AG04450 (cell line): ENCODE measurements at regions of chr7 and their contacts with region 1.

Region 1: DNA sequence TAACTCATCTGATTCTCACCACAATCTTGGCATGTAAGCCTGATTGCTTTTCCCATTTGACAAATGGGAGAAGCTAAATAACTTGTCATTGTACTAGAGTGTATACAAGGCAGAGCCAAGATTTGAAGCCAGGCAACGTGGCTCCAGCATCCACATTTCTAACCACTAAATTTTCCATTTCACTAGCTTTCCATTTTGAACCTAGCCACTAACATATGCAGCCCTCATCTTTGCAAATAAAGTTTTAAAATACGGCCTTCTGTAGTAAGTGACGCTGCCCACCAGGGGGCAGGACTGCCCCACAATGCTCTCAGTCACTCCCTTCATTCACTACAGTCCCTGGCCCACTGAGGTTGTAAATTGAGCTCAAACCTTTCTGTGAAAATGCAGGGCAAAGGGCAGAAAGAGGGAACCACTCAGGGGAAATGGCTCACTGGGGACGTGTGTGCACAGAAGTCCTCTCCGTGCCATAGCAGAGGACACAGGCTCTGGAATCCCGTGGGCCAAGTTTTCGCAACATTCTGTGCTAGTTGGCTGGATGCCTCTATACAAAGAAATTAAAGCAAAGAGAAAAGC is 315.7 kb downstream of the TNS3 start:
- DNase-seq: peak; percentile 20
- H3K4me3 ChIP-seq: no peak overlapping the region
- H3K27ac ChIP-seq: no peak overlapping the region
- H3K27me3 ChIP-seq: no peaks in the 10 kb centered on the region
- CTCF ChIP-seq: peak; percentile 94

Region 2: DNA sequence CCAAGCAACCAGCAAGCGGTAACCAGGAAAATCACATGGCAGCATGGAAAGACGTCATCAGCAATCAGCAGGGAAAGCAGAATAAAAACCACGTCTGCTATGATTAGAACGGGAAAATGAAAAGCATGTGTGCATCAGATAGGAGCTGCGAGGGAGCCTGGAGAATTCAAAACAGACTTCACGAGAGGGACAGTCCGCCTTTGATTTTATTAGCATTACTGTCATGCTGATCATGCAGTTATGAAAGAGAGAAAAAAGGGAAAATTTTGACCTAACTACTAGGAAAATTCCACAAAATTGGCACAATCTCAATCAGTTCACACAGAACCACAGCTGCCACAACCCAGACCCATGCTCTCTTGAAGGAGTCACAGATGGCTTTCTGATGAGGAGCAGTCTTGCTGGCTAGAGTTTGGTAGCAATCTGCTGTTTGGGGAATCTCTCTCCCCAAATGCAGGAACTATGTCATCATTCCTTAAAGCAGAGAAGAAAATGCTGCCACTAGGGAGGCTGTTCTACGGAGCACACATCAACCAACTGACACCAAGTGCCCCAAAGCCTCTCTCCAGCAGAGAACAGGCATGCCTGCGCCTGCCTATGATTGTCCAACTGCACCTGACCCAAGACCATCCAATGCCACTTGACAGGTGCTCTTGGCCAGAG is 19.8 kb after region 1 on chr7:
- CTCF ChIA-PET with region 1: interaction called, 18 read pairs
- POLR2A ChIA-PET with region 1: no interaction called
- DNase-seq: no peak
- H3K4me3 ChIP-seq: no peak overlapping the region
- H3K27ac ChIP-seq: no peak overlapping the region
- H3K27me3 ChIP-seq: no peaks in the 10 kb centered on the region
- CTCF ChIP-seq: no peak

Region 3: DNA sequence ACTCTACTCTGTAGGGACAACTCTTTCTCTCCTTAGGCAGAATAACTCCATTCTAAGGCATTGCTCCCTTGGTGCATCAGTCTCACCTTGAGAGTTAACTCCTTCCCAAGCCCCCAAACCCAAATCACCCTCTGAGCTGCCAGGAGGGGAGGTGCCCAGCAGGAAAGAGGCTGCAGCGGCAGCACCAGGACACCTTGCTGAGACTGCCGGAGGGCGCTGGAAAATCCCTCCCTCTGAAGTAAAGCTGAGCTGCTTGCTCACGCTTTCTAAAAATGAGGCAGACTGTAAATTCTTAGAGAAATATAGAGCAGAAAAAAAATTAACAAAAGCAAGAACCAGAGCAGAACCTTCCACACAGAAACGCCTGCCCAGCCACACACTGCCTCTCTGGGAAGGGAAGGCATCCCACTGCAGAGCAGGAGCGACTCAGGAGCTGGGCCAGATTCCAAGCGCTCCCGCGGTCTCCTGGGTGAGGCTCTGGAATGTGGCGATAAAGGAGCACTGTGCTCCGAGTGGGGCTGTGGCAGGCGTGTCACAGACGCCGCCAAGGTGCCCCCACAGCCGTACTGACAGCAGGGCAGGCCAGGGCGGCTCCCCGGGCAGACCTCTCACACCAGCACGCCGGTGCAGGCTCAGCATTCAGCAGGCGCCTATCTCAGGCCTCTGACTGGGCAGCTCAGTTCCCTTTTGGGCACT is 113.6 kb after region 1 on chr7:
- CTCF ChIA-PET with region 1: interaction called, 20 read pairs
- POLR2A ChIA-PET with region 1: no interaction called
- DNase-seq: peak; percentile 36
- H3K4me3 ChIP-seq: no peak overlapping the region
- H3K27ac ChIP-seq: peak overlapping the region; percentile 78
- H3K27me3 ChIP-seq: no peaks in the 10 kb centered on the region
- CTCF ChIP-seq: no peak

Region 4: GRCh38 chr7:47422611-47423010 is 156.4 kb after region 1 on chr7:
- CTCF ChIA-PET with region 1: interaction called, 14 read pairs
- POLR2A ChIA-PET with region 1: no interaction called
- DNase-seq: no peak
- H3K4me3 ChIP-seq: no peak overlapping the region
- H3K27ac ChIP-seq: peak overlapping the region; percentile 23
- H3K27me3 ChIP-seq: no peaks in the 10 kb centered on the region
- CTCF ChIP-seq: no peak

Region 5: DNA sequence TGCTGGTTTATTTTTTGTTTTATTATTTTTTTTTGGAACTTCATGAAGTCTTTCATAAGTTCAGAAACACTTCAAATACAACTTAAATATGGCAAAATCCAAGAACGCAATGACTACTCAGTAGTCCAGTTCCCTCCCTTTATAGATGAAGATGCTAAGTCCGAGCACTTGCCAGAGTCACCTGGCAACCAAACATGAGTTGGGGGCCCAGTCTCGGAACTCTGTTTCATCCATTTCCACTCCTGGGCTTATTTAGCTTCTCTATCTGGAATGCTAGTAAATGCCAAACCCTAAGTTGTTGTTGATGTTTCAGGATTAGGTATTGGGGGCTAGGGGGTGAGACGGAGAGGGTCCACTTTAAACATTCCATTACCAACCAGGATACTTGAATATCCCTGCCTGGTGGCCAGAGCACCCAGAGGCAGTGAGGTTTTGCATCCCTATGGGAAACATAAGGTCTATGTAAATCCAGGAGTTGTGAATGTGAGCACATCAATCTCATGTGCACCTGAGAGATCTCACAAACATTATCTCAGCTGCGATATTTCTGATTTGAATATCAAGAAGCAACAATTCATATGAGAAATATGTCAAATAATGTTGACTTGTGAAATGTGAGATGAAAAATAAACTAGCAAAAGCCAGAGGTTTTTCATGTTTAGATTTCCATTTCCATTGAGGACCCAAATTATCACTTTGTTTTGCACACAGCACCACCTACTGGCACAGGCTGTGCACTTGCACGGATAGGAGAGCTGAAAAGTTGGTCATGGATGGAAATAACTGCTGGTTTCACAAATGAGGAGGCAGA is 552.8 kb after region 1 on chr7:
- CTCF ChIA-PET with region 1: interaction called, 21 read pairs
- POLR2A ChIA-PET with region 1: no interaction called
- DNase-seq: peak; percentile 54
- H3K4me3 ChIP-seq: no peak overlapping the region
- H3K27ac ChIP-seq: no peak overlapping the region
- H3K27me3 ChIP-seq: no peaks in the 10 kb centered on the region
- CTCF ChIP-seq: peak; percentile 98

Region 6: DNA sequence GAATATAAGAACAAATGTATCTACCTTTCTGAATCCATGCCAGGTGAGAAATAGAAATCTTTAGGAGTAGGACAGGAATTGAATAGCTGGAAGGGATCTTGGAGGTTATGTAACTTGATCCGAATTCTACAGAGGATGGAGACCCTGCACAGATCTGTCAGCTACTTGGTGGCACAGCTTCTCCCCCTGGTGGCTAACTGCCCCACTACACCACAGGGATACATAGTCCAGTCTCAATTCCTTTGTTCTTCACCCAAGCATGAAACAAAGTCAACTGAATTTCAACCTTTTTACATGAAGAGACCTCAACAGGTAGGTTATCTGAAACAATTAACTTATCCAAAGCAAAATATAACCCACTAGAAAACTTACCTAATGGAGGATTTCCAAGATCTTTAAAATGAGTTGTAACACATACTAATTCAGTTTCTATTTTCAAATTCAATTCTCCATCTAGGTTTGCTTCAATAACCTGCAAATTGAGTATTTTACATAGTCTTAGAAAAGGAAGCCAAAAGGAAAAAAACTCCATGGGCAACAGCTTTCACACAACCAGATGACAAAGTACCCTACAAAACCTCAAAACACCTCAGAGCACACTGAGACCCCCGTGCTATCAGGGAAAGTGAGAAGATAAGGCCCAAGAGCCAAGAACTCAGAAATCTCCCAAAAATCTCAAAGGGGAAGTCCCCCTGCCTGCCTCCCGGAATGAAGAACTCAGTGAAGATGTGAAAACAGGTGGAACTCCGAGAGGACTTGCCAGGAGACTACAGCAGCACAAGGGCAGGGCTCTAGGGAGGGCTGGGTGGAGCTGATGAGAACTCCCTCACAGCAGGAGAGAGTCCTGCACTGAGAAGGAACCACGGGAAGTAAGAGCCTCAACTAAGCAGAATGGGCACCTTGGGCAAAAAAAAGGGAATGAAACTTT is 702.9 kb after region 1 on chr7:
- CTCF ChIA-PET with region 1: interaction called, 48 read pairs
- POLR2A ChIA-PET with region 1: no interaction called
- DNase-seq: no peak
- H3K4me3 ChIP-seq: no peak overlapping the region
- H3K27ac ChIP-seq: no peak overlapping the region
- H3K27me3 ChIP-seq: no peaks in the 10 kb centered on the region
- CTCF ChIP-seq: peak; percentile 97